A549 (cell line): ENCODE measurements at regions of chr11 and their contacts with region 1.

Region 1: GRCh38 chr11:13313005-13313819 is 35.6 kb downstream of the BMAL1 start:
- DNase-seq: no peak
- ATAC-seq: no peak
- H3K4me3 ChIP-seq: no peak overlapping the region
- H3K27ac ChIP-seq: no peak overlapping the region
- H3K4me1 ChIP-seq: peaks cover 23% of the 10 kb centered on the region
- CTCF ChIP-seq: no peak
- EP300 ChIP-seq: no peak
- POLR2A ChIP-seq: no peak
- RAD21 ChIP-seq: no peak

Region 2: GRCh38 chr11:13297917-13298356 is 15.3 kb before region 1 on chr11:
- CTCF ChIA-PET with region 1: interaction called, 19 read pairs
- POLR2A ChIA-PET with region 1: no interaction called
- DNase-seq: no peak
- ATAC-seq: no peak
- H3K4me3 ChIP-seq: no peak overlapping the region
- H3K27ac ChIP-seq: no peak overlapping the region
- H3K4me1 ChIP-seq: 0 out of 3 replicates have a peak, but pooled peaks cover under 1% of the 10 kb centered on the region
- CTCF ChIP-seq: no peak
- EP300 ChIP-seq: no peak
- POLR2A ChIP-seq: no peak
- RAD21 ChIP-seq: no peak